ENCODE measurements at regions of chr11 and their contacts with region 1.

Region 1: GRCh38 chr11:1546536-1547400 is 25.3 kb downstream of the DUSP8 start:
- DNase-seq: peak; percentile 42
- H3K4me3 Mint-ChIP-seq: peak overlapping the region; percentile 12
- H3K27ac Mint-ChIP-seq: no peak overlapping the region
- H3K4me1 Mint-ChIP-seq: no peaks in the 10 kb centered on the region
- H3K27me3 Mint-ChIP-seq: no peaks in the 10 kb centered on the region
- CTCF ChIP-seq: peak; percentile 98

Region 2: DNA sequence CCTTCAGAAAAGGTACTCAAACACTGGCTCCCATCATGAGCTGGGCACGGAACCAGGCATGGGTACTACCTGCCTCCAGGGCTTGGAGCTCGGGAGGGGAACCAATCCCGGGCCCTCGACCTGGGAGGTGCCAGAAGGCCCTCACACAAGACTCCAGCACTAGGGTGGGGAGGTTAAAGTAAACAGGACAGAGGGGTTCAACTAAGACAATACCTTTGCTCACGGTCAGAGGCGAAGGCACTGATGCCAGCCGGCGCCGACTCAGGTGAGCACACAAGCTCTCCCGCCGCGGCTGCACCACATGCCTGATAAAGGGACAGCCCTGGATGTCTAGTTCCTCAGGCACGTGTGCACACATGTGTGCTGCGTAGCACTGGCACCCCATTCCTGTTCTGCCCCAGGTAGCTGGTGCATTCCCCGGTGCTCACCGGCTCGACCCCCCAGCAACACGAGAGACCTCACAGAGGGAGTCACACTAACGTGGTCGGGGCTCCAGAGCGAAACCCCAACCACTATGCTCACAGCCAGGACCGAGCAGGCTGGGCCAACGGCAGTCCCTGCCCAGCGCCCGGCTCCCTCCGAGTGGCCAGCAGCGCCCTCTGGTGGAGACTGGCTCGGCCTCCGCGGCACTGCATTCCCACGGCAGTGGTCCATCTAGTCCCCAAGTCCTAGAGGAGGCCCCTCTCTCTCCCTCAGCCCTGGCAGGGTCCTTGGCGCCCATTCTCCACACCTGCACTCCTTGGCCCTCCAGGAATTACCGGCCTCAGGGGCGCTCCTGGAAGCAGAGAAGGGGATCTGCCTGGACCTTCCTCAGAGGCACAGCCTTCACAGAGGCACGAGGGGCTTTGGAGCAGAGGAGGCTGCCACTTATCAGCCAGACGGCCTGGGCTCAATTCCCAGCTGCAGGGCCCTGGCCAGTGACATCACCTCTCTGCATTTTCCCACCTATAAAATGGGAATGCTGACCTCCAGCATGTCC is 31.4 kb before region 1 on chr11:
- CTCF ChIA-PET with region 1: no interaction called
- POLR2A ChIA-PET with region 1: no interaction called
- intact Hi-C with region 1: no loop called
- DNase-seq: peak; percentile 53
- H3K4me3 Mint-ChIP-seq: no peak overlapping the region
- H3K27ac Mint-ChIP-seq: no peak overlapping the region
- H3K4me1 Mint-ChIP-seq: peaks cover 27% of the 10 kb centered on the region
- H3K27me3 Mint-ChIP-seq: no peaks in the 10 kb centered on the region
- CTCF ChIP-seq: peak; percentile 89

Region 3: DNA sequence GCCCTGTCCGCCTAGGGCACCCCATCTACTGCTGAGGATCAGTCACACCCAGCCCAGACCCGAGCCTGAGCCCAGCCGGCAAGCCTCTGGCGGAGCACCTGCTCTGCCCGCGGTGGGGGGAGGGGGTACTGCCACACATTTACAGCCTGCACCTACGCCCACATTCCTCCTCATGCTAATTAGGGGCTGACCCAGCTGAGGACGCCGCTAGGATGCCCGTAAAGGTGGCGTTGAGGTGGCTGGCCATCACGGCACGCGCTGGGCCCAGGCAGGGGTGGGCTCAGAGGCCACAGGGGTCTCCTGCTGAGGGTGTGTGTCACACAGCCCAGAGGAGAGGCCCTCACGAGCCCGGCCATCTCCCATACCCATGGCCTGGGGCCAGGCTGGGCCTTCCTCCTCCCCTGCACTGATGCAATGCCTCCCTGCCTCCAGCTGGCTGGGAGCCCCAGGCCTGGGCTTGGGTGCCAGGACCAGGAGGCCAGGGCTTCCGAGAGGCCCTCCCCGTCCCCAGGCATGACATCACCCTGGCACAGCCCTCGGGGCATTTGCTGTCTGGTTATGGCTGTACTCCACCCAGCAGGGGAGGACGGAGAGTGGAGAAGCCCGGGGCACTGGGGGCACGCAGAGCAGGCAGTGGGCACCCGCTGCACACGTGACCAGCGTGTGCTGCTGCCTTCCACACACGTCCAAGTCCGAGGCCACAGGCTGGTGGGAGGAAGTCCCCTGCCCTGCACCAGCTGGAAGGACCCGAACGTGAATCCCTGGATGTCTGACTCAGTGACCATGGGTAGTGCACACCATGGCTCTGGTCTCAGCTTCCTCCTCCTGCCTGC is 12.6 kb after region 1 on chr11:
- CTCF ChIA-PET with region 1: interaction called, 15 read pairs
- POLR2A ChIA-PET with region 1: interaction called, 8 read pairs
- intact Hi-C with region 1: no loop called
- DNase-seq: peak; percentile 96
- H3K4me3 Mint-ChIP-seq: peak overlapping the region; percentile 52
- H3K27ac Mint-ChIP-seq: peak overlapping the region; percentile 49
- H3K4me1 Mint-ChIP-seq: peaks cover 26% of the 10 kb centered on the region
- H3K27me3 Mint-ChIP-seq: no peaks in the 10 kb centered on the region
- CTCF ChIP-seq: no peak

Region 4: DNA sequence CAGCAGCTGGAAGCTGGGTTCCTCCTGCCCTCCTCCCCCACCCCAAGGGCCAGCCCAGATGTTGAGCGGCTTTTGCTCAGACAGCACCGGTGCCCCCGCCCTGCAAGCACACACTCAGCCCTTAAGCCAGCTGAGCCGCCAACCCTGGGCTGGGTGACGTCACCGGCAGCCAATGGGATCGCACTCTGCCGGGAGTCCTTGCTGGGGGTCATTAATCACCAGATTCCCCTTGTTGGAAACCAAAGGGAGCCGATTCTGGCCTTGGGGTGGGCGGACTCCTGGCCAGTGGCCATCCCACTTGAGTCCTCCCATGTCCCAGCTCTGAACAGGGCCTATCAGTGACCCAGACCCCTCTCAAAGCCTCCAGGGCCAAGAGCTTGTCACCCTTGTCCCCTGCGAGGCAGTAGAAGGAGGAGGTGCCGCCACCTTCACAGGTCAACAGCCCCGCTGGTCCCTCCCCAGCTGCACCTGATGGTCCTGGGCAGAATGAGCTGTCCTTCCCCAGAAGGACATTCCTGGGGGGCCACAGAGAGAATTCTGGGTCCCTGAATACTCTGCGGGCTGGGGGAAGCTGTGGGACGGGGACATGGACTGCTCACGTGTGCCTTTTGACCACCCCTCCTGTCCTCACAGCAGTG is 17.9 kb after region 1 on chr11:
- CTCF ChIA-PET with region 1: interaction called, 15 read pairs
- POLR2A ChIA-PET with region 1: interaction called, 6 read pairs
- intact Hi-C with region 1: no loop called
- DNase-seq: peak; percentile 24
- H3K4me3 Mint-ChIP-seq: no peak overlapping the region
- H3K27ac Mint-ChIP-seq: no peak overlapping the region
- H3K4me1 Mint-ChIP-seq: peaks cover 16% of the 10 kb centered on the region
- H3K27me3 Mint-ChIP-seq: no peaks in the 10 kb centered on the region
- CTCF ChIP-seq: no peak

Region 5: GRCh38 chr11:1586699-1587098 is 39.9 kb after region 1 on chr11:
- CTCF ChIA-PET with region 1: interaction called, 10 read pairs
- POLR2A ChIA-PET with region 1: interaction called, 3 read pairs
- intact Hi-C with region 1: no loop called
- DNase-seq: no peak
- H3K4me3 Mint-ChIP-seq: no peak overlapping the region
- H3K27ac Mint-ChIP-seq: no peak overlapping the region
- H3K4me1 Mint-ChIP-seq: peaks cover 7% of the 10 kb centered on the region
- H3K27me3 Mint-ChIP-seq: peaks cover 12% of the 10 kb centered on the region
- CTCF ChIP-seq: no peak

Region 6: GRCh38 chr11:1852877-1853276 is 306.1 kb after region 1 on chr11 and contains the start of gene LSP1:
- CTCF ChIA-PET with region 1: no interaction called
- POLR2A ChIA-PET with region 1: no interaction called
- intact Hi-C with region 1: no loop called
- DNase-seq: no peak
- H3K4me3 Mint-ChIP-seq: no peak within 1 kb of the TSS
- H3K27ac Mint-ChIP-seq: no peak within 1 kb of the TSS
- H3K4me1 Mint-ChIP-seq: peaks cover 11% of the 10 kb centered on the region
- H3K27me3 Mint-ChIP-seq: no peaks in the 10 kb centered on the region
- CTCF ChIP-seq: no peak
- total RNA-seq, gene LSP1: 3.3 and 3.7 TPM in 2 replicates